Right cardiac atrium (tissue), 5 donors: ENCODE measurements at regions of chr19 and their contacts with region 1.

Region 1: GRCh38 chr19:45768984-45769782 is at the start of gene SIX5:
- DNase-seq: peak; percentile 99 to 100 (median 99)
- ATAC-seq: peak; percentile 72 to 73
- H3K4me3 ChIP-seq: peak within 1 kb of the TSS; percentile 80
- H3K27ac ChIP-seq: peak within 1 kb of the TSS; percentile 99
- H3K4me1 ChIP-seq: no peaks in the 10 kb centered on the region
- H3K27me3 ChIP-seq: no peaks in the 10 kb centered on the region
- total RNA-seq, gene SIX5: 15.8 to 33.2 (median 24.1) TPM

Region 2: DNA sequence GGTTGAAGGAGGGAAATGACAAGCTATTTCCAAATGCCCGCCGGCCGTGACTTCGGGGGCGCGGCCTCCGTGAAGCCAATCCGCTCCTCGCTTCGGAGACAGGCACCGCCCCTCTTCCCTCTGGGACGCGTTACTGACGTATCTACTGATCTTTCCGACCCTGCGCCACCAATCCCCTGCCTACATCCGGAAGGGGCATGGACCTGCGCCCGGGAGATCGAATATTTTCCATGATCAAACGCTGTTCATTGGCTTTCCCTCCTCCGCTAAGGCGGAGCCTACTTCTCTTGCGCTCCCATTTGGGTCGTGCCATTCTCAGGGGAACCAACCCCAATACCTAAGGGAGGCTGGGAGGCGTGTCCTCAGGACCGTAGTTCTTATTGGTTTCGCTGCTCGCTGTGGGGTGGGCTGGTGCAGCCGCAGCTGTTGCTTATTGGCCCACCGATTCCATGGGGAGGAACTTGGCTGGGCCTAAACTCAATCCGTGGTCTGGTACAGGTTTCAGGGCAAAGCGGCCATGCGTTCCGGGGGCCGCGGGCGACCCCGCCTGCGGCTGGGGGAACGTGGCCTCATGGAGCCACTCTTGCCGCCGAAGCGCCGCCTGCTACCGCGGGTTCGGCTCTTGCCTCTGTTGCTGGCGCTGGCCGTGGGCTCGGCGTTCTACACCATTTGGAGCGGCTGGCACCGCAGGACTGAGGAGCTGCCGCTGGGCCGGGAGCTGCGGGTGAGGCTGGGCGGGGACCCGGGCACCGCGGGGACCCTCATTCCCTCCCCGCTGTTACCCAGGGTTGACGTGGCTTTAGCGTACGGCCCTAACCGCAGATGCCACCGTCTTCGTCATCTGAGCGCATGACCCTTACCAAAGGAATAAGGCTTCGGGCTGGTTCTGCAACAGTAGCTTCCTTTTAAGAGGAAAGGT is 76.7 kb before region 1 on chr19 and contains the start of gene QPCTL:
- intact Hi-C with region 1: loop called in 1 of 4 experiments (anchors 5 kb)
- DNase-seq: peak; percentile 97 to 98 (median 97)
- ATAC-seq: peak; percentile 96
- H3K4me3 ChIP-seq: peak within 1 kb of the TSS; percentile 66
- H3K27ac ChIP-seq: peak within 1 kb of the TSS; percentile 73
- H3K4me1 ChIP-seq: no peaks in the 10 kb centered on the region
- H3K27me3 ChIP-seq: no peaks in the 10 kb centered on the region
- total RNA-seq, gene QPCTL: 2.5 to 3.3 (median 3.1) TPM

Region 3: GRCh38 chr19:45717166-45717982 is 51.8 kb before region 1 on chr19:
- intact Hi-C with region 1: loop called in 1 of 4 experiments (anchors 10 kb)
- DNase-seq: peak; percentile 99 to 100 (median 99)
- ATAC-seq: peak; percentile 96 to 98
- H3K4me3 ChIP-seq: peak overlapping the region; percentile 60
- H3K27ac ChIP-seq: peak overlapping the region; percentile 88
- H3K4me1 ChIP-seq: peaks cover 7% of the 10 kb centered on the region
- H3K27me3 ChIP-seq: no peaks in the 10 kb centered on the region

Region 4: DNA sequence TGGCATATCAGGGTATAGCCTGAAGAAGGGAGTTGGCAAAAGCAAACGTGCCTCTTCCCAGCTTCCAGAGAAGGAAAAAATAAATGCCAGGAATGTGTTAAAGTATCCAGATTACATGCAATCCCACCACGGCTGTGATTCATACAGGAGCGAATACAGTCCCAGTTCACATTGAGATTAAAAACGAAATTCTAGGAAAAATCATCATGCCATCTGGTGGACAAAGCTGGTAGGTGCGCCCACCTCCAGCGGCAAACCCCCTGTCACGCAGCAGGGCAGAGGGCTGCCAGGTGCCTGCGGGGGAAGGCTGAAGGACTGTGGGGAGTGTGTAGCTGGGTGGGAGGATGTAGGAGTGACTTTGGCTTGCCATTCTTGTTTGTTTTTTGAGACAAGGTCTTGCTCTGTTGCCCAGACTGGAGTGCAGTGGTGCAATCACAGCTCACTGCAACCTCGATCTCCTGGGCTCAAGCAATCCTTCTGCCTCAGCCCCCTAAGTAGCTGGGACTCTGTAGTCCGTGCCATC is 29.9 kb after region 1 on chr19:
- intact Hi-C with region 1: no loop called
- DNase-seq: peak in 2 of 3 donors; percentile 75 to 82
- ATAC-seq: peak; percentile 69 to 75
- H3K4me3 ChIP-seq: no peak overlapping the region
- H3K27ac ChIP-seq: no peak overlapping the region
- H3K4me1 ChIP-seq: no peaks in the 10 kb centered on the region
- H3K27me3 ChIP-seq: no peaks in the 10 kb centered on the region